Activated CD8-positive, alpha-beta T cell treated with anti-CD3 and anti-CD28 coated beads, Interleukin-2, amount 10 ng/mL, durations not matched to agents 7 days and 5 days (primary cell): ENCODE measurements at regions of chr3 and their contacts with region 1.

Region 1: DNA sequence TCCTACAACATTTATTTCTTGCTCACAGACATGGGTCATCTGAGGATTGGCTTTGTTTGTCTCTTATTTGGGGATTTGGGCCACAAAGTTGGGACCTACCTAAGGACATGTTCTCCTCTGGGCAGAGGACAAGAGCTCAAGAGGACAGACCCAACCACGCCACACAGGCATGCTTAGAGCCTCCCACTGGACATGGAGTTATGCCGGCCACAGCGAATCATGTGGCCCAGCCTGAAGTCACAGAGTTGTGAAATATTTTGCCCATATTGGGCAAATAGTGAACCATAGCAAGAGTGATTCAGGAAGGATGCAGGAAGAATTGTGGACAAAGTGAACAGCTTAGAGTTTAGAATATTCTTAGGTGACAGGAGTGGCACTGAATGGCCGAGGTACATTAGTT is 9.9 kb downstream of the TRAK1 start:
- DNase-seq: no peak
- ATAC-seq: no peak
- H3K4me3 Mint-ChIP-seq: no peak overlapping the region
- H3K27ac Mint-ChIP-seq: no peak overlapping the region
- H3K4me1 Mint-ChIP-seq: peaks cover 13% of the 10 kb centered on the region
- H3K27me3 Mint-ChIP-seq: no peaks in the 10 kb centered on the region

Region 2: DNA sequence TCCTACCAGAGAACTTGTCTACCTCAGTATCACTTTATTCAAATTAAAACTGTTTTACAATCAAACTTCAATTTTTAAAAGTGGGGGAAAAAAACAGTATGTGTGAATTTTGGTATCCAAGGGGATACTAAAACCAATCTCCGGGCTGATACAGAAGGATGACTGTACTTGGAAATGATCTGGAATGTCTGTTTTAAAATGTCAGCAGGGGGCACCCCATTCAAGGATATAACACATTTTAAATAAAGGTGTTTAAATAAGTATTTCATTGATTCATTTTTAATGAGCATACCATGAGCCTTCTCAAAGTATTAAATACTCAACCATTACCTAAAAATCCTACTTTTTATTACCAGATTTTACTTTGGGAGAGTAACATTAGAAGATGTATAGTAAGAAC is 207.1 kb before region 1 on chr3:
- CTCF ChIA-PET with region 1: interaction called, 13 read pairs
- POLR2A ChIA-PET with region 1: no interaction called
- DNase-seq: no peak
- ATAC-seq: no peak
- H3K4me3 Mint-ChIP-seq: no peak overlapping the region
- H3K27ac Mint-ChIP-seq: no peak overlapping the region
- H3K4me1 Mint-ChIP-seq: no peaks in the 10 kb centered on the region
- H3K27me3 Mint-ChIP-seq: no peaks in the 10 kb centered on the region

Region 3: GRCh38 chr3:41997702-41998550 is 103.1 kb before region 1 on chr3:
- CTCF ChIA-PET with region 1: interaction called, 15 read pairs
- POLR2A ChIA-PET with region 1: no interaction called
- DNase-seq: no peak
- ATAC-seq: no peak
- H3K4me3 Mint-ChIP-seq: no peak overlapping the region
- H3K27ac Mint-ChIP-seq: no peak overlapping the region
- H3K4me1 Mint-ChIP-seq: peaks cover 4% of the 10 kb centered on the region
- H3K27me3 Mint-ChIP-seq: peaks cover 7% of the 10 kb centered on the region

Region 4: GRCh38 chr3:42013691-42014457 is 87.2 kb before region 1 on chr3:
- CTCF ChIA-PET with region 1: interaction called, 10 read pairs
- POLR2A ChIA-PET with region 1: no interaction called
- DNase-seq: peak; percentile 45
- ATAC-seq: peak; percentile 37
- H3K4me3 Mint-ChIP-seq: peak overlapping the region; percentile 79
- H3K27ac Mint-ChIP-seq: peak overlapping the region; percentile 96
- H3K4me1 Mint-ChIP-seq: peaks cover 35% of the 10 kb centered on the region
- H3K27me3 Mint-ChIP-seq: no peaks in the 10 kb centered on the region

Region 5: DNA sequence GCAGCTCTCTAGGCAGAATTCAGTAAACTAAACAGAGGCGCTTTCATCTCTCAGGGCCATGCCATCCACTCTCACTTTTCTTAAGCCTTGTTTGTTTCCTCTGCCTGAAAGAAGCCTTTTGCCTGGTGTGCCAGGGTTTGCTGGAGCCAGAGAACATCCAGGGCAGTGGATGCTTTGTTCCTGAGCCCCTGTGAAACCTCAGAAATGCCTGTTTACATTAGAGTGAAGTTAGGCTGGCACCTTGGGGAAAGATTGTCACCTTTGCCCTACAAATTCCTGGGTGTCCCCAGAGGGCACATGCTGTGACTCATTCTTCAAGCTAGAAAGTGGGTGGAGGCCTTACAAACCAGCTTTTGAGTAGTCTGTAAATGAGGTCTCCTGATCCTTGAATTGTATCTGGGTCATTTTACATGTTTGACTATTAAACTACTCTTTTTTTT is 20.6 kb before region 1 on chr3:
- CTCF ChIA-PET with region 1: interaction called, 11 read pairs
- POLR2A ChIA-PET with region 1: no interaction called
- DNase-seq: no peak
- ATAC-seq: peak; percentile 36
- H3K4me3 Mint-ChIP-seq: no peak overlapping the region
- H3K27ac Mint-ChIP-seq: peak overlapping the region; percentile 62
- H3K4me1 Mint-ChIP-seq: peaks cover 39% of the 10 kb centered on the region
- H3K27me3 Mint-ChIP-seq: no peaks in the 10 kb centered on the region

Region 6: GRCh38 chr3:42220436-42221121 is 119.5 kb after region 1 on chr3:
- CTCF ChIA-PET with region 1: no interaction called
- POLR2A ChIA-PET with region 1: no interaction called
- DNase-seq: no peak
- ATAC-seq: no peak
- H3K4me3 Mint-ChIP-seq: no peak overlapping the region
- H3K27ac Mint-ChIP-seq: no peak overlapping the region
- H3K4me1 Mint-ChIP-seq: peaks cover 28% of the 10 kb centered on the region
- H3K27me3 Mint-ChIP-seq: no peaks in the 10 kb centered on the region